Activated T-helper 2 cell treated with anti-CD3 and anti-CD28 coated beads, Interferon-gamma antibody, Interleukin-2, Interleukin-4, amounts not matched to agents 10 μg/mL and 5 μg/mL and 100 μg/mL, durations not matched to agents 14 hours and 24 hours and 36 hours (primary cell): ENCODE measurements at regions of chr3 and their contacts with region 1.

Region 1: DNA sequence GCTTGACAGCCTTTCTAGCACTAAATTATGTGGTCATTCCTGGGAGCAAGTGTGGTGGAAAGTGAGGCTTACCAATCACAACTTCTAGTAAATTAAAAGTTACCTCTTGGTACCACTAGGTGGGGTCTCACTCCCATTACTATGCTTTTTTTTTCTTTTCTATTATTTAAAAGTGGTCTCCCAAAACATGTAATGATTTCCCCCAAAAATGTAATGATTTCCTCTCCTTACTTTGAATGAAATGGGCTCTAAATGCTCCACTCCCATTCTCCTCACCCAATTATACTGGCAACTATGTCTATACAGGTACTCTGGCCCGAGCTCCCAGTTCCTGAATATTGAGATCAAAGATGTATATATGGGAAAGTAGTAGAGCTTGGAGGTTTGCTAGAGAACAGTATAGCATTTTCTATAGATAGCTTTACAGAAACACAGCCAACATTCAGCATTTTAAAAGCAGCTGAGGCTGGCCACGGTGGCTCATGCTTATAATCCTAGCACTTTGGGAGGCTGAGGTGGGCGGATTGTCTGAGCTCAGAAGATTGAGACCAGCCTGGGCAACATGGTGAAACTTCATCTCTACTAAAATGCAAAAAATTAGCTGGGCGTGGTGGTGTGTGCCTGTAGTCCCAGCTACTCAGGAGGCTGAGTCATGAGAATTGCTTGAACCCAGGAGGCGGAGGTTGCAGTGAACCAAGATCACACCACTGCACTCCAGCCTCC is 70.9 kb downstream of the DCUN1D1 start:
- DNase-seq: no peak
- H3K4me3 Mint-ChIP-seq: no peak overlapping the region
- H3K27ac Mint-ChIP-seq: no peak overlapping the region
- H3K4me1 Mint-ChIP-seq: peaks cover 44% of the 10 kb centered on the region
- H3K27me3 Mint-ChIP-seq: no peaks in the 10 kb centered on the region

Region 2: DNA sequence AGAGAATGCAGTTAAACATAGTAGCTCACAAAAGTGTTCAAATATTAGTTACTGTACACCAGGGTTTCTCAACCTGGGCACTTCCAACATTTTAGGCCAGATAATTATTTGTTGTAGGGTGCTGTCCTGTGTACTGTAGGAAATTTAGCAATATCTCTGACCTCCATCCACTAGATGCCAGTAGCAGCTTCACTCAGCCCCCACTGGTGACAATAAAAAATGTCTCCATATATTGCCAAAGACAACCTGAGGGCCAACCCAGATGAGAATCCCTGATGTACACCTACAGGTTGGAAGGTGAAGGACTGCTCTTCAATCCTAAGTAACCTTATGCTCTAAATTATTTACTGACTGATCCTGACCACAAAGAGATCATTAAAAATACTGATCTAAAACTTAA is 38.4 kb after region 1 on chr3:
- intact Hi-C with region 1: loop called (anchors 5 kb)
- DNase-seq: no peak
- H3K4me3 Mint-ChIP-seq: no peak overlapping the region
- H3K27ac Mint-ChIP-seq: no peak overlapping the region
- H3K4me1 Mint-ChIP-seq: peaks cover 2% of the 10 kb centered on the region
- H3K27me3 Mint-ChIP-seq: no peaks in the 10 kb centered on the region

Region 3: GRCh38 chr3:182967218-182968204 is 58.0 kb after region 1 on chr3:
- intact Hi-C with region 1: loop called (anchors 1 kb)
- DNase-seq: no peak
- H3K4me3 Mint-ChIP-seq: peak overlapping the region; percentile 46
- H3K27ac Mint-ChIP-seq: peak overlapping the region; percentile 76
- H3K4me1 Mint-ChIP-seq: peaks cover 39% of the 10 kb centered on the region
- H3K27me3 Mint-ChIP-seq: no peaks in the 10 kb centered on the region

Region 4: GRCh38 chr3:183099026-183099837 is 189.8 kb after region 1 on chr3 and contains the start of gene MCCC1:
- intact Hi-C with region 1: loop called (anchors 10 kb)
- DNase-seq: peak; percentile 97
- H3K4me3 Mint-ChIP-seq: peak within 1 kb of the TSS; percentile 96
- H3K27ac Mint-ChIP-seq: peak within 1 kb of the TSS; percentile 92
- H3K4me1 Mint-ChIP-seq: peaks cover 28% of the 10 kb centered on the region
- H3K27me3 Mint-ChIP-seq: no peaks in the 10 kb centered on the region
- total RNA-seq, gene MCCC1: 25.8 and 31.2 TPM in 2 replicates